Activated CD4-positive, alpha-beta memory T cell treated with anti-CD3 and anti-CD28 coated beads for 36 hours (primary cell): ENCODE measurements at regions of chr3 and their contacts with region 1.

Region 1: GRCh38 chr3:102089904-102090492 is 240.7 kb downstream of the NFKBIZ start:
- DNase-seq: no peak
- H3K4me3 Mint-ChIP-seq: no peak overlapping the region
- H3K27ac Mint-ChIP-seq: no peak overlapping the region
- H3K4me1 Mint-ChIP-seq: peaks cover 48% of the 10 kb centered on the region
- H3K27me3 Mint-ChIP-seq: no peaks in the 10 kb centered on the region

Region 2: GRCh38 chr3:101732240-101732641 is 357.8 kb before region 1 on chr3:
- CTCF ChIA-PET with region 1: no interaction called
- POLR2A ChIA-PET with region 1: no interaction called
- intact Hi-C with region 1: no loop called
- DNase-seq: no peak
- H3K4me3 Mint-ChIP-seq: no peak overlapping the region
- H3K27ac Mint-ChIP-seq: no peak overlapping the region
- H3K4me1 Mint-ChIP-seq: peaks cover 4% of the 10 kb centered on the region
- H3K27me3 Mint-ChIP-seq: no peaks in the 10 kb centered on the region

Region 3: GRCh38 chr3:101809178-101810021 is 280.6 kb before region 1 on chr3:
- CTCF ChIA-PET with region 1: interaction called, 5 read pairs
- POLR2A ChIA-PET with region 1: no interaction called
- intact Hi-C with region 1: loop called (anchors 2 kb)
- DNase-seq: peak; percentile 31
- H3K4me3 Mint-ChIP-seq: no peak overlapping the region
- H3K27ac Mint-ChIP-seq: no peak overlapping the region
- H3K4me1 Mint-ChIP-seq: peaks cover 43% of the 10 kb centered on the region
- H3K27me3 Mint-ChIP-seq: no peaks in the 10 kb centered on the region

Region 4: DNA sequence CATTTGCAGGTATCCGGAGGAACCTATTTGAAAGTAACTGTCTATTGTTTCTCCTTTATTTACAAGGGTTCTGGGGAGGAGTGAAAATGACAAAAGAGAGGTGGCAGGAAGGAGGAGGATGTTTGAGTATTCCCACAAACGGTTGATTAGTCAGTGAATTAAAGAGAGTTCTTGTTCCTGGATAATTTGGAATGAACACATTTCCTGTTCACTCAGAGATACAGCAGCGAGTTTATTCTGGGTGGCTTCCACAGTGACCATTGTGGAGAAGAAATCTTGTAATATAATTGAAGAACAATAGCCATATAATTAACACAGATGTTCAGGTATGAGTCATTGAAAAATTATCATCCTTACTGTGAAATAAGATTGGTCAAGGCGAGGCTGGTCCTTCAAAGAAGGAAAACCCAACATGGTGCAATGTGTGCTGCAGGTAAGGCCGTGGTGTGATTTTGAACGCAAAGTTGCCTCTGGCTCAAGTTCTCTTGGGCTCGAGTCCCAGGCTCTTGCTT is 163.3 kb before region 1 on chr3:
- CTCF ChIA-PET with region 1: no interaction called
- POLR2A ChIA-PET with region 1: interaction called, 3 read pairs
- intact Hi-C with region 1: loop called (anchors 1 kb)
- DNase-seq: no peak
- H3K4me3 Mint-ChIP-seq: no peak overlapping the region
- H3K27ac Mint-ChIP-seq: no peak overlapping the region
- H3K4me1 Mint-ChIP-seq: peaks cover 29% of the 10 kb centered on the region
- H3K27me3 Mint-ChIP-seq: peaks cover 6% of the 10 kb centered on the region

Region 5: GRCh38 chr3:101988591-101988990 is 101.4 kb before region 1 on chr3:
- CTCF ChIA-PET with region 1: no interaction called
- POLR2A ChIA-PET with region 1: interaction called, 3 read pairs
- intact Hi-C with region 1: loop called (anchors 1 kb)
- DNase-seq: peak; percentile 40
- H3K4me3 Mint-ChIP-seq: no peak overlapping the region
- H3K27ac Mint-ChIP-seq: no peak overlapping the region
- H3K4me1 Mint-ChIP-seq: peaks cover 29% of the 10 kb centered on the region
- H3K27me3 Mint-ChIP-seq: peaks cover 11% of the 10 kb centered on the region

Region 6: DNA sequence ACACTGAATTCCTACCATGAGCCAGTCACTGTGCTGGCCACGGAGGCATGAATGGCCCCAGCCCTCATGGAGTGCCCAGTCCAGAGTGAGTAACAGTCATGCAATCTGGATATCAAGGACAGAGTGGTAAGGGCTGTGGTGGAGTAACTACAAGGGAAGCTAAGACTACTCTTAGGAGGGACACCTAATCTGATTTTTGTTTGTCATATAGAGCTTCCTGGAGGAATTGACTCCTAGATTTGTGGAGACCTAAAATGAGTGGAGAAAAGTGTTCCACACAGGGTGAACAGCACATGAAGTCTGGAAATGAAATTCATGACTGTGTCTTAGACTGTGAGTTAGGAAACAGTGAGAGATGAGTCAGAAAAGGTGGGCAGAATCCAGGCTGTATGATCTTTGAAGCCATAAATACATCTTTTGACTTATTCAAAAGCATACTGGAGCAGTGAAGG is 20.8 kb before region 1 on chr3:
- CTCF ChIA-PET with region 1: no interaction called
- POLR2A ChIA-PET with region 1: no interaction called
- intact Hi-C with region 1: loop called (anchors 2 kb)
- DNase-seq: no peak
- H3K4me3 Mint-ChIP-seq: no peak overlapping the region
- H3K27ac Mint-ChIP-seq: no peak overlapping the region
- H3K4me1 Mint-ChIP-seq: peaks cover 6% of the 10 kb centered on the region
- H3K27me3 Mint-ChIP-seq: no peaks in the 10 kb centered on the region

Region 7: GRCh38 chr3:102129760-102130608 is 40.0 kb after region 1 on chr3:
- CTCF ChIA-PET with region 1: no interaction called
- POLR2A ChIA-PET with region 1: no interaction called
- intact Hi-C with region 1: loop called (anchors 2 kb)
- DNase-seq: no peak
- H3K4me3 Mint-ChIP-seq: no peak overlapping the region
- H3K27ac Mint-ChIP-seq: no peak overlapping the region
- H3K4me1 Mint-ChIP-seq: peaks cover 16% of the 10 kb centered on the region
- H3K27me3 Mint-ChIP-seq: no peaks in the 10 kb centered on the region

Region 8: DNA sequence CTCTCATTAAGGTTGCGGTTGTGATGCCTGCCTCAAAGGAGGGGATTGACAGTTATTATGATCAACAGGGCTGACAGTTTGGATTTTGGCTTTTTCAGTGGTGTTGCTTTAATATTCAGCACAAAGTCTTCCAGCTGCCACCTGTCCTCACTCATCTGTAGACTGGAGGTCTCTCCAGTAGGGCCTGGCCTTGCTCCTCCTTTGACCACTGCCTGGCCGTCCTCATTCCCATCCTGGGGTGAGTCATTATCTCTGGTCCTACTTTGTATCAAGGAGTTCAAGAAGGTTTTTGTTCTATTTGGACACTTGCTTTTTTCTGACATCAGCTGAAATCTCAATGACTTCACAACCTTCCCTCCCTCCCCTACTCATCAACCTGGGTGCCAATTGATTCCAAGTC is 249.7 kb after region 1 on chr3:
- CTCF ChIA-PET with region 1: no interaction called
- POLR2A ChIA-PET with region 1: no interaction called
- intact Hi-C with region 1: no loop called
- DNase-seq: no peak
- H3K4me3 Mint-ChIP-seq: no peak overlapping the region
- H3K27ac Mint-ChIP-seq: no peak overlapping the region
- H3K4me1 Mint-ChIP-seq: no peaks in the 10 kb centered on the region
- H3K27me3 Mint-ChIP-seq: peaks cover 3% of the 10 kb centered on the region

Region 9: GRCh38 chr3:102512734-102513518 is 422.9 kb after region 1 on chr3:
- CTCF ChIA-PET with region 1: no interaction called
- POLR2A ChIA-PET with region 1: no interaction called
- intact Hi-C with region 1: no loop called
- DNase-seq: no peak
- H3K4me3 Mint-ChIP-seq: no peak overlapping the region
- H3K27ac Mint-ChIP-seq: no peak overlapping the region
- H3K4me1 Mint-ChIP-seq: no peaks in the 10 kb centered on the region
- H3K27me3 Mint-ChIP-seq: no peaks in the 10 kb centered on the region

Region 10: DNA sequence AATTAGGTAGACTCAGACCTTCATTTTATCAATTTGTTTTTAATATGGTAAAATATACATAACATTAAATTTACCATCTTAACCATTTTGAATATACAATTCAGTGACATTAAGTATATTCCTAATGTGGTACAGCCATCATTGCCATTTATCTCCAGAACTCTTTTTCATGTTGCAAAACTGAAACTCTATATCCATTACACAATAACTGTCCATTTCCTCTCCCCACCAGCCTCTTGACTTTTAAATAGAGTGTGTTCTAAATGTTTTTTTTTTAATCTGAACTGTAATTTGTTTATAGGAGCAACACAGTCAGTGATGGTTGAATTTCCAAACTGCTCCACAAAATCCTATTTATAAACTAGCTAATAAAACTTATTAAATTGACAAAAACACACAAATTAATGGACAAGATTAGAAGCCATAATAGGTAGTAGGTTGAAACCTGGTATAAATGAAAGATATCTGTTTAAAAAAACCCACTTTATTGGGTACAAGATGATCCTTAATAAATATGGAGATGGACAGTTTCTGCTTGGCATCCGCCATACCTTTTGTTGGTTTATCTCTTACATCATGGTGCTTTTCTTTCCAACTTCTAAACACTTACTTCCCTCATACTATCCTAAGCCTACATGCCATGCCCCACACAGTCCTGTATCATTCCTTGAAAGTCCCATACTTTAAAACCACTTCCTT is 487.2 kb after region 1 on chr3:
- CTCF ChIA-PET with region 1: no interaction called
- POLR2A ChIA-PET with region 1: no interaction called
- intact Hi-C with region 1: no loop called
- DNase-seq: no peak
- H3K4me3 Mint-ChIP-seq: no peak overlapping the region
- H3K27ac Mint-ChIP-seq: no peak overlapping the region
- H3K4me1 Mint-ChIP-seq: no peaks in the 10 kb centered on the region
- H3K27me3 Mint-ChIP-seq: peaks cover 1% of the 10 kb centered on the region